T-cell (primary cell): ENCODE measurements at regions of chr5 and their contacts with region 1.

Region 1: DNA sequence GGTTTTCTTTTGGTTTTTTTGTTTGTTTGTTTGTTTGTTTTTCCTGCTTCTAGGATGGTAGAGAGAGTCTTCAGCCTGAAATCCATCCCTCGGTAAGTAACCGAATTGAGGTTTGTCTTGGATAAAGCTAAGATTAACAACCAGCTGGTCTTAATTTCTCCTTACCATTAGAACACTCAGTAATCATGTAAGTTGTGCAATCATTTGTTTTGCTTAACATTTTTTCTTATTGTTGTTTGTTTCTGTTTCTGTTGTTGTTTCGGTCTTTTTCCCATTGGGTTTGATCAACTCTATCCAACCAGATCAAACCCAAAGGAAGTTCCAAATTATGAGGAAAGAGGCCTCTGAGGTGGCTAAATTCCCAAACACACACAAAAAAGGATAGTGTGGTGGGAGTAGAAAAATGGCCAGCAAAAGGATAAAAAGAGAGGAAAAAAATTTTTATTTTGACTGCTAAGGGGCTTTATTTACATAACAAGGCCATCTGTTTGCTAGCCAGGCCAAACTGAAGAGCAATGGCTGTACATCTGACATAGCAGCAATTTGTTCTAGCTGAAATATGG is 49.6 kb upstream of the ANKRD31 start:
- DNase-seq: no peak
- ATAC-seq: no peak
- H3K4me3 ChIP-seq: no peak overlapping the region
- H3K4me3 Mint-ChIP-seq: no peak overlapping the region
- H3K27ac ChIP-seq: no peak overlapping the region
- H3K27ac Mint-ChIP-seq: no peak overlapping the region
- H3K4me1 ChIP-seq: no peaks in the 10 kb centered on the region
- H3K4me1 Mint-ChIP-seq: no peaks in the 10 kb centered on the region
- H3K27me3 ChIP-seq: peaks cover 0 to 9% of the 10 kb centered on the region in 2 experiments
- H3K27me3 Mint-ChIP-seq: peaks cover 3 to 5% of the 10 kb centered on the region in 2 donors

Region 2: GRCh38 chr5:75108931-75109596 is 177.2 kb before region 1 on chr5:
- CTCF ChIA-PET with region 1: no interaction called
- POLR2A ChIA-PET with region 1: interaction called in 1 of 2 experiments, 12 read pairs
- DNase-seq: peak in 1 of 35 experiments; percentile 28
- ATAC-seq: peak; percentile 60 to 74 (median 70)
- H3K4me3 ChIP-seq: no peak overlapping the region
- H3K4me3 Mint-ChIP-seq: peak overlapping the region in 1 of 3 donors; percentile 17
- H3K27ac ChIP-seq: no peak overlapping the region
- H3K27ac Mint-ChIP-seq: peak overlapping the region; percentile 58 to 76
- H3K4me1 ChIP-seq: peaks cover 3 to 9% of the 10 kb centered on the region in 2 experiments
- H3K4me1 Mint-ChIP-seq: peaks cover 25 to 28% (median 26%) of the 10 kb centered on the region in 3 donors
- H3K27me3 ChIP-seq: no peaks in the 10 kb centered on the region
- H3K27me3 Mint-ChIP-seq: no peaks in the 10 kb centered on the region

Region 3: GRCh38 chr5:75951158-75951557 is 664.9 kb after region 1 on chr5:
- CTCF ChIA-PET with region 1: no interaction called
- POLR2A ChIA-PET with region 1: no interaction called
- DNase-seq: no peak
- ATAC-seq: no peak
- H3K4me3 ChIP-seq: no peak overlapping the region
- H3K4me3 Mint-ChIP-seq: no peak overlapping the region
- H3K27ac ChIP-seq: no peak overlapping the region
- H3K27ac Mint-ChIP-seq: no peak overlapping the region
- H3K4me1 ChIP-seq: no peaks in the 10 kb centered on the region
- H3K4me1 Mint-ChIP-seq: no peaks in the 10 kb centered on the region
- H3K27me3 ChIP-seq: no peaks in the 10 kb centered on the region
- H3K27me3 Mint-ChIP-seq: peaks cover 12 to 18% of the 10 kb centered on the region in 2 donors